Activated B cell treated with CpG ODN at 0.5 μM for 24 hours (primary cell): ENCODE measurements at regions of chr12 and their contacts with region 1.

Region 1: GRCh38 chr12:79174626-79175025 is 310.1 kb downstream of the SYT1 start:
- DNase-seq: no peak
- ATAC-seq: no peak
- H3K4me3 Mint-ChIP-seq: no peak overlapping the region
- H3K27ac Mint-ChIP-seq: no peak overlapping the region
- H3K4me1 Mint-ChIP-seq: no peaks in the 10 kb centered on the region
- H3K27me3 Mint-ChIP-seq: no peaks in the 10 kb centered on the region
- CTCF ChIP-seq: no peak

Region 2: GRCh38 chr12:78470354-78471195 is 704.1 kb before region 1 on chr12:
- CTCF ChIA-PET with region 1: interaction called, 3 read pairs
- POLR2A ChIA-PET with region 1: no interaction called
- intact Hi-C with region 1: loop called (anchors 5 kb)
- DNase-seq: no peak
- ATAC-seq: no peak
- H3K4me3 Mint-ChIP-seq: no peak overlapping the region
- H3K27ac Mint-ChIP-seq: no peak overlapping the region
- H3K4me1 Mint-ChIP-seq: no peaks in the 10 kb centered on the region
- H3K27me3 Mint-ChIP-seq: no peaks in the 10 kb centered on the region
- CTCF ChIP-seq: no peak

Region 3: GRCh38 chr12:78562368-78563205 is 612.0 kb before region 1 on chr12:
- CTCF ChIA-PET with region 1: interaction called, 3 read pairs
- POLR2A ChIA-PET with region 1: no interaction called
- intact Hi-C with region 1: loop called (anchors 10 kb)
- DNase-seq: no peak
- ATAC-seq: no peak
- H3K4me3 Mint-ChIP-seq: no peak overlapping the region
- H3K27ac Mint-ChIP-seq: no peak overlapping the region
- H3K4me1 Mint-ChIP-seq: no peaks in the 10 kb centered on the region
- H3K27me3 Mint-ChIP-seq: no peaks in the 10 kb centered on the region
- CTCF ChIP-seq: no peak

Region 4: DNA sequence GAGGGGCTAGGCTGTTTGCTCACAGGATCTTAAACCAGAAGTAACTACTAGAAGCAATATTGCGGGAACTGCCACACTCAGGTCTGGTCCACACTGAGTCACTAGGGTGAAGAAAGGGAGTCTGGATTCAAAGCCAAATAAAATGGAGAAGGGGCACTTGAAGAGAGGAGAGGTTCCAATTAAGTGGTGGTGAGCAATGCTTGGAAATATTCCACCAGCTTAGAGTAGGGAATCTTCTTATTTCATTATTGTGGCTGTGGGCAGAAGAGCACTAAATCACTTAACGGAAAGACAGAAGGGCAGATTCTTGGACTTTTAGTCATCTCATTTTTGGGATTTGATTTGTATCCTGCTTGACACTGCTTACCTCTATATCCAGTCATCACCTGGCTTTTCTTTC is 808.9 kb after region 1 on chr12:
- CTCF ChIA-PET with region 1: no interaction called
- POLR2A ChIA-PET with region 1: no interaction called
- intact Hi-C with region 1: no loop called
- DNase-seq: no peak
- ATAC-seq: no peak
- H3K4me3 Mint-ChIP-seq: no peak overlapping the region
- H3K27ac Mint-ChIP-seq: no peak overlapping the region
- H3K4me1 Mint-ChIP-seq: no peaks in the 10 kb centered on the region
- H3K27me3 Mint-ChIP-seq: peaks cover 20% of the 10 kb centered on the region
- CTCF ChIP-seq: no peak